CD4-positive, alpha-beta memory T cell (primary cell): ENCODE measurements at regions of chr2 and their contacts with region 1.

Region 1: GRCh38 chr2:162091325-162092007 is 17.5 kb upstream of the DPP4 start:
- DNase-seq: peak in 3 of 5 donors; percentile 9 to 13 (median 11)
- H3K4me3 ChIP-seq: no peak overlapping the region
- H3K4me3 Mint-ChIP-seq: no peak overlapping the region
- H3K27ac ChIP-seq: no peak overlapping the region
- H3K27ac Mint-ChIP-seq: no peak overlapping the region
- H3K4me1 ChIP-seq: no peaks in the 10 kb centered on the region
- H3K4me1 Mint-ChIP-seq: peaks cover 0 to 7% (median 6%) of the 10 kb centered on the region in 4 donors
- H3K27me3 ChIP-seq: no peaks in the 10 kb centered on the region
- H3K27me3 Mint-ChIP-seq: no peaks in the 10 kb centered on the region

Region 2: DNA sequence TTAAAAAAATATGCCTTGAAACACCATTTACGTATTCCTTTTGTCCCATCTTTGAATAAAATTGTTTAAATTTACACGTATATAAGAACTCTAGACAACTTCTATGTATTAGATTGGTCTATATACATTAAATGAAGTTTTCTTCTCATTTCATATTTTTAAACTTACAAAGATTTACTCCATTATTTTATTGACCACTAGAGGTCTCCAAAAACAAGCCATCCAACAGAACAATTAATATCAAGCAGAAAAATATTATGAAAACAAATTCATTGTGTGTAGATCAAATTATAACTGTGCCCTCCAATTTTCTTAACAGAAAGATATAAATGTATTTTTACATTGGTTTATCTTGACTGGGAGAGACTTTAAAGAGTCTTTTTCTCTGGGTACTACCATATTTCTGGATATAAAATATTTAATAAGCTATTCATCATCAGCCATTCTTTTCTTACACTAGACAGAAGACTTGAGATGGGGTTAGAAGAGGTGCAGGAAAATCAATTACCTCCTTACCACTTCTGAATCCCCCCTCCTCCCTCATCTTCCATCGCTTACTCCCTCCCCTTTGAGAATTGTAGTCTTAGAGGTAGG is 83.9 kb before region 1 on chr2:
- CTCF ChIA-PET with region 1: interaction called, 8 read pairs
- POLR2A ChIA-PET with region 1: no interaction called
- intact Hi-C with region 1: loop called (anchors 1 kb)
- DNase-seq: peak in 4 of 5 donors; percentile 36 to 46 (median 40)
- H3K4me3 ChIP-seq: no peak overlapping the region
- H3K4me3 Mint-ChIP-seq: no peak overlapping the region
- H3K27ac ChIP-seq: no peak overlapping the region
- H3K27ac Mint-ChIP-seq: peak overlapping the region in 6 of 7 donors; percentile 4 to 33 (median 21)
- H3K4me1 ChIP-seq: peaks cover 40% of the 10 kb centered on the region
- H3K4me1 Mint-ChIP-seq: peaks cover 36 to 55% (median 44%) of the 10 kb centered on the region in 4 donors
- H3K27me3 ChIP-seq: no peaks in the 10 kb centered on the region
- H3K27me3 Mint-ChIP-seq: no peaks in the 10 kb centered on the region